ENCODE measurements at regions of chr15 and their contacts with region 1.

Region 1: GRCh38 chr15:52331490-52332240 is 36.1 kb upstream of the MYO5C start:
- DNase-seq: peak; percentile 58
- H3K4me3 Mint-ChIP-seq: peak overlapping the region; percentile 57
- H3K27ac Mint-ChIP-seq: peak overlapping the region; percentile 76
- H3K4me1 Mint-ChIP-seq: peaks cover 28% of the 10 kb centered on the region
- H3K27me3 Mint-ChIP-seq: no peaks in the 10 kb centered on the region

Region 2: DNA sequence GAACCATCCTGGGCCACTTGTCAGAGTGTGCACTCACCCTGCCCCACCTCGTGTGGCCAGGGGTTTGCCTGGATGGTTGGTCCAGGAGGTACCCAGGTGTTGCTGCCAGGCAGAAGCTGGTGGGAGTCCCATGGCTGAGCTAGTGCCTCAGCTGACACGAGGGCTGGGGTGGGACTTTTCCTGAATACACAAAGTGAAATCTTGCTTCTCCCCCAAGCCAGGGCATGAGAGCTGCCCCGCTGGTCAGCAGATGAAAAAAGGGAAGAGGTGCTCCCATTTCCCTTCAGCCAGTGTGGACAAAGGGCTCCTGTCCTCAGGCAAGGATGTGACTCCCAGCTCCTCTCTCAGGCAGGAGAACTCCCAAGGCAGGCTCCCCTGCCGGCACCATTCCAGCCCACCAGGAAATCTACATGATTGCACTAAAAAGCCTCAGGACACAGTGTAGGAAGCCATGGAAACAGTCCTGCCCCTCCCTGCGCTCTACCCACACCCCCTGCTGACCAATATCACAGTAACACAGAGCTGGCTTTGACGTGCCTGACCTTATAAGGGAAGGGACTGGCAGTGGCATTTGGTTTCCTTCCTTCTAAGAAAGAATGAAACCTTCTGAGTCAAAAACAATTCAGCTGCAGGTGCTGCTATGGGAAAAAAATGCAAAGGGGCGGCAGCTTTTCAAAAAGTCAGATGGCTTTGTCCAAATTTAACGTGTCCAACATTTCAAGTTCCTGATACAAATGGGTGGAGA is 70.0 kb before region 1 on chr15:
- intact Hi-C with region 1: loop called (anchors 1 kb)
- DNase-seq: peak; percentile 63
- H3K4me3 Mint-ChIP-seq: peak overlapping the region; percentile 68
- H3K27ac Mint-ChIP-seq: peak overlapping the region; percentile 90
- H3K4me1 Mint-ChIP-seq: peaks cover 44% of the 10 kb centered on the region
- H3K27me3 Mint-ChIP-seq: no peaks in the 10 kb centered on the region

Region 3: DNA sequence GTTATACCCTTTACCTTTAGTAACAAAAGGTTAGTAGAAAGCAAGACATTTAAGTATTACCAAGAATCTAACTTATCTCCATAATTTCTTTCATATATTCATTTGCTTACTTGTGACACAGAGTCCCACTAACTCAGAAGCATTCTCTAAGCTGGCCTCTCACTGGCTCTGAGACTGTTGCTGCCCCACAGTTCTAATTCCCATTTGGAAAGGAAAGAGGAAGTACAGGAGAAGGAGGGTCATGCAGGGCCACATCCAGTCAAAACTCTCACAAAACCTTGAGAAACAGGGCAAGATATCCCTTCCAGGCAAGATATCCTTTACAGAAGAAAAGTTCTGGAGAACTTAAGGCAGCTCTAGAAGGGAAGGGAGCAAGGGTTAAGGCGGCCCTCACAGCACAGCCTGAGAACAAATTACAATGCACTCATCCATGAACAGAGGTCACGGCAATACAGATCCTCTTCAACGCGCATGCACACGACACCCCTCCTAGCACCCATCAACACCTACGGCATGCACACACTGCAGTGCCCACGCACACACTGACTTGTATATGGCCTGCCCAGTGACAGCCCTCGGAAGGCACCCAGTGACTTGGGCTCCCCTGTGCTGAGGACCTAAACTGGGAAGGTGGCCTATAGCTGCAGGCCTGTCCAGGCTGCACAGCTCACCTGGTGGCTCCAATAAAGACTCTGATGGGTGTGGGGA is 23.1 kb before region 1 on chr15:
- intact Hi-C with region 1: no loop called
- DNase-seq: no peak
- H3K4me3 Mint-ChIP-seq: no peak overlapping the region
- H3K27ac Mint-ChIP-seq: no peak overlapping the region
- H3K4me1 Mint-ChIP-seq: peaks cover 6% of the 10 kb centered on the region
- H3K27me3 Mint-ChIP-seq: peaks cover 2% of the 10 kb centered on the region

Region 4: DNA sequence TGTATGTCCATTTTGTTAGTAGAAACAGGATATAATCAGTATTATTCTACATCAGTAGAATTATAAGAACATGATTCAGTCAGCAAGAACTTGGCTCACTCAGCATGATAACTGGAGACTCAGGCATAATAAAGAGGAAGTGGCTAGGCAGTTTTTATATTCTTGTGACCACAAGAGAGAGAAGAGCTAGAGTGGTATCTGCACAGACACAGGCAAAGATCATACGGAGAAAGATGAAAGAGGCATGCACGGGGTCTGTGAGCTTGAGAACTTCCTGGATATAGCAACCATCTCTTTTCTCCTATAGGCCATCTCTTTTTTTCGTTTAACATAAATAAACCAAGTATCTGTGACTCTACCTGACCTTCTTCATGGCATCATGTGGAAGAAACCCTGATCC is 150.2 kb after region 1 on chr15:
- intact Hi-C with region 1: loop called (anchors 5 kb)
- DNase-seq: peak; percentile 49
- H3K4me3 Mint-ChIP-seq: peak overlapping the region; percentile 49
- H3K27ac Mint-ChIP-seq: peak overlapping the region; percentile 81
- H3K4me1 Mint-ChIP-seq: peaks cover 63% of the 10 kb centered on the region
- H3K27me3 Mint-ChIP-seq: peaks cover 5% of the 10 kb centered on the region

Region 5: GRCh38 chr15:52568601-52569256 is 237.1 kb after region 1 on chr15 and contains the start of gene ARPP19:
- intact Hi-C with region 1: loop called (anchors 1 kb)
- DNase-seq: peak; percentile 75
- H3K4me3 Mint-ChIP-seq: peak within 1 kb of the TSS; percentile 92
- H3K27ac Mint-ChIP-seq: peak within 1 kb of the TSS; percentile 99
- H3K4me1 Mint-ChIP-seq: peaks cover 43% of the 10 kb centered on the region
- H3K27me3 Mint-ChIP-seq: peaks cover 2% of the 10 kb centered on the region
- total RNA-seq, gene ARPP19: 195 and 216 TPM in 2 replicates